ENCODE measurements at regions of chr20 and their contacts with region 1.

Region 1: GRCh38 chr20:13221673-13222318 is 722 bp downstream of the ISM1 start:
- DNase-seq: peak in 1 of 2 donors; percentile 77
- H3K4me3 ChIP-seq: peak overlapping the region; percentile 64 to 73
- H3K27ac ChIP-seq: peak overlapping the region in 1 of 2 donors; percentile 45
- H3K4me1 ChIP-seq: peaks cover 0 to 11% of the 10 kb centered on the region in 2 donors
- H3K27me3 ChIP-seq: peaks cover 5% of the 10 kb centered on the region
- CTCF ChIP-seq: no peak

Region 2: DNA sequence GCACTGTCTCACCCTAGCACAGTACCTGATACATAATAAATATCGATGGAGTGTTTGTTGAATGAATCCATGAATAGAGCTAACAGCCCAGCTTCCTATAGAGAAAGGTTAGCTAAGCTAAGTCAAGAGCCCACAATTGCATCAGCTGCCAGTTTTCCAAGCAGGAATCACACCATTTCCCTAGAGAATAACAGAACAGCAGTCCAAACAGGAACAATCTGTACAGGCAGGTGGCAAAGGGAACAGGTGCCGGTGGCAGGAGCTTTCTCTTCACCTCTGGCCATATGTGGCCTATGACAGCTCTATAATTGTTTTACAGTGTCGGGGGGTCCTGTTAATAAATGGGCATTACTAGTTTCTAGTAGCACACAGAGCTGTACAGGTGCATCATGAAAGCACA is 38.1 kb after region 1 on chr20:
- intact Hi-C with region 1: no loop called
- DNase-seq: no peak
- H3K4me3 ChIP-seq: no peak overlapping the region
- H3K27ac ChIP-seq: no peak overlapping the region
- H3K4me1 ChIP-seq: no peaks in the 10 kb centered on the region
- H3K27me3 ChIP-seq: no peaks in the 10 kb centered on the region
- CTCF ChIP-seq: no peak

Region 3: DNA sequence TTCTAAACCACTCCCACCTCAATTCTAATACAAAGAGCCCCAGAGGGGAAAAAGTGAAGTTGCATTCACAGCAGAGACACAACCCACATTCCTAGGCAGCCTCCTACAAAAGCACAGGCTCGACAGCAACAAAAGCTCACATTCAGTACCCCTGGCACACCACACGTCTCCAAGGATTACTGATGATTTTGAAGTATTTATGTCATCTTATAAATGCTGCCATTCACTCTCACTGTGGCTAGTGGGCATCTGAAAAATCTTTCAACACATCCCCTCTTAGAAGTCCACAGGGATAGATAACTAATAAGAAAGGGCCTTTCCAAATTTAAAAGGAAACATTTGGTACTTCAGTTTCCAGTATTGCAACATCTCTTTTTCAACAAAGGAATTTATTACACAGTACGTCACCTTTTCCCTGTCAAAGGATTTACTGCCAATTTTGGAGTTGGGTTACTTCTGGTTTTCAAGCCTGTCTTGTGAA is 270.2 kb after region 1 on chr20:
- intact Hi-C with region 1: loop called (anchors 5 kb)
- DNase-seq: peak in 1 of 2 donors; percentile 73
- H3K4me3 ChIP-seq: no peak overlapping the region
- H3K27ac ChIP-seq: peak overlapping the region; percentile 68 to 72
- H3K4me1 ChIP-seq: peaks cover 7 to 27% of the 10 kb centered on the region in 2 donors
- H3K27me3 ChIP-seq: no peaks in the 10 kb centered on the region
- CTCF ChIP-seq: peak in 1 of 3 experiments; percentile 9

Region 4: DNA sequence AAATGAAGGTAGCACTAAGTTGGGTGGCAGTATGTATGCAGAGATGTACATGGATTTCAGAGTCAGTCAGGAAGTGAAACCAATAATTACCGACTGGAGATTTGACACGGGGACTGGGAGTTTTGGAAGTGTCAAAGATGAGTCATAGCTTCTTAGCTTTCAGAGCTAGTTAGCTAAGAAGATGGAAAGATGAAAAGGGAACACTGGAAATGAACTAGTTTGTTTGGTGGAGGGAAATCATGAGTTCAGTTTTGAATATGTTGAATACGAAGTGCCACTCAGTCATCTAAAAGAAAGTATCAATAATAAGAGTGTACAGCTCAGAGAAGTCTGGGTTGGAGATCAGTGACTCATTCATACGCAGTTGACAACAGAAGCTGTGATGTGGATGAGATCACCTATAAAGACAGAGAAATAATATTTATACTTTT is 555.4 kb after region 1 on chr20:
- intact Hi-C with region 1: loop called (anchors 5 kb)
- DNase-seq: no peak
- H3K4me3 ChIP-seq: no peak overlapping the region
- H3K27ac ChIP-seq: no peak overlapping the region
- H3K4me1 ChIP-seq: no peaks in the 10 kb centered on the region
- H3K27me3 ChIP-seq: no peaks in the 10 kb centered on the region
- CTCF ChIP-seq: no peak

Measured in ascending aorta (tissue), 2 donors.